WTC11 (cell line): ENCODE measurements at regions of chr11 and their contacts with region 1.

Region 1: GRCh38 chr11:23540101-23540561 is 679.9 kb upstream of the CCDC179 start:
- DNase-seq: peak; percentile 14
- ATAC-seq: peak; percentile 94
- H3K4me3 Mint-ChIP-seq: no peak overlapping the region
- H3K27ac Mint-ChIP-seq: no peak overlapping the region
- H3K4me1 Mint-ChIP-seq: peaks cover 20% of the 10 kb centered on the region
- H3K27me3 Mint-ChIP-seq: no peaks in the 10 kb centered on the region
- CTCF ChIP-seq: peak; percentile 46

Region 2: GRCh38 chr11:23112987-23113886 is 426.9 kb before region 1 on chr11:
- CTCF ChIA-PET with region 1: interaction called, 14 read pairs
- POLR2A ChIA-PET with region 1: no interaction called
- DNase-seq: peak; percentile 21
- ATAC-seq: peak; percentile 87
- H3K4me3 Mint-ChIP-seq: no peak overlapping the region
- H3K27ac Mint-ChIP-seq: no peak overlapping the region; the same call in 1 of the 2 replicates
- H3K4me1 Mint-ChIP-seq: peaks cover 26% of the 10 kb centered on the region
- H3K27me3 Mint-ChIP-seq: no peaks in the 10 kb centered on the region; the same call in 1 of the 2 replicates
- CTCF ChIP-seq: peak; percentile 52

Region 3: GRCh38 chr11:23555085-23555484 is 15.0 kb after region 1 on chr11:
- CTCF ChIA-PET with region 1: interaction called, 10 read pairs
- POLR2A ChIA-PET with region 1: no interaction called
- DNase-seq: no peak
- ATAC-seq: no peak
- H3K4me3 Mint-ChIP-seq: no peak overlapping the region
- H3K27ac Mint-ChIP-seq: no peak overlapping the region
- H3K4me1 Mint-ChIP-seq: peaks cover 12% of the 10 kb centered on the region
- H3K27me3 Mint-ChIP-seq: no peaks in the 10 kb centered on the region
- CTCF ChIP-seq: no peak